PC-3 (cell line): ENCODE measurements at regions of chr15 and their contacts with region 1.

Region 1: DNA sequence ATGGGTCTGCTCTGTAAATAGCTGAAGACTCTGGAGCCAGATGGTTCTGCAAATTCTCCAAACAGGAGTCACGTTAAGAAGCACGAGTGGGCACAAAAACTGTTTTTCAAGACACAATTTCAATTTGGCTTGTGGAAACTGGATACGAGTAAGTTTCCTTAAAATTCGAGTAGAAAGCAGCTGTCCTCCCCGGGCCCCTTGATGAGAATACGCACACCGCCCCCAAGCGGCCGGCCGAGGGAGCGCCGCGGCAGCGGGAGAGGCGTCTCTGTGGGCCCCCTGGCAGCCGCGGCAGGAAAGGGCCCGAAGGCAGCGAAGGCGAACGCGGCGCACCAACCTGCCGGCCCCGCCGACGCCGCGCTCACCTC is 778 bp upstream of the THBS1 start:
- DNase-seq: peak; percentile 96
- ATAC-seq: peak; percentile 59
- H3K4me3 ChIP-seq: peak overlapping the region; percentile 87
- H3K27ac ChIP-seq: peak overlapping the region; percentile 93
- H3K4me1 ChIP-seq: peaks cover 45% of the 10 kb centered on the region
- H3K27me3 ChIP-seq: no peaks in the 10 kb centered on the region
- CTCF ChIP-seq: peak; percentile 95

Region 2: DNA sequence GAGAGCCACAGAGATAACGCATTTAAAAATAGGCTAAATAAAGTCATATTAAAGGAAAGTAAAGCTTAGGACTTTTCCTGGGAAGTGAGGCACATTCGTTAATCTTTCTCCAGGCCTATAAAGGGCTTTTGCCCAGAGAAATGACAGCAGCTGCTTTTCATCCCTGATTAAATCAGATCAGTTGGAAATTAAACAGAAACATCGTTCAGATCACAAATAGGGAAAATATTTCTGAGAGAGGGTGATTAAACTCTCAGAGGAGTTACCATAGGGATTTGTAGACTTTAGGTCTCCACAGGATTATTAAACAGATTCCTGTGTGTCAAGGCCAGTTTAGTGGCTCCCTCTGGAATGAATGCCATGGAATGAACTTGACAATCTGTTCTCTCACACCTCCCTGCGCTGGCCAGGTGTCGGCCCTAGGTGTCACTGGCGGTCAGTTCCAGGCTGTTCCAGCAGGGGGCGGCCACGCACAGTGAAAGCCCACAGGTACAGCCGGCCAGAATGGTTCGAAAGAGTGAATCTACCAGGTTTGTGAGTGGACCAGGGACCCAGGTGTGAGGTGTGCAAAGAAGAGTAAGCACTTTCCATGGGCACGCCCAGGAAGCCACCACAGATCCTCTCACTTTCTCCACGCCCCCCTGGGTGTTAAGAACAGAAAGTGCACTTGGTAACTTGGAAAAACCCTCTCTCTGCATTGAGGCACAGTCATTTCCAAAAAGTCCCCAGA is 762.5 kb before region 1 on chr15:
- CTCF ChIA-PET with region 1: no interaction called
- POLR2A ChIA-PET with region 1: no interaction called
- intact Hi-C with region 1: loop called (anchors 1 kb)
- DNase-seq: peak; percentile 91
- ATAC-seq: peak; percentile 100
- H3K4me3 ChIP-seq: no peak overlapping the region; the same call in 1 of the 2 replicates
- H3K27ac ChIP-seq: no peak overlapping the region
- H3K4me1 ChIP-seq: peaks cover 4% of the 10 kb centered on the region; the same call in 1 of the 2 replicates
- H3K27me3 ChIP-seq: no peaks in the 10 kb centered on the region
- CTCF ChIP-seq: peak; percentile 100

Region 3: GRCh38 chr15:39273717-39274411 is 306.2 kb before region 1 on chr15:
- CTCF ChIA-PET with region 1: interaction called, 3 read pairs
- POLR2A ChIA-PET with region 1: no interaction called
- intact Hi-C with region 1: loop called (anchors 1 kb)
- DNase-seq: peak; percentile 100
- ATAC-seq: peak; percentile 83
- H3K4me3 ChIP-seq: peak overlapping the region; percentile 57
- H3K27ac ChIP-seq: peak overlapping the region; percentile 97
- H3K4me1 ChIP-seq: peaks cover 54% of the 10 kb centered on the region
- H3K27me3 ChIP-seq: no peaks in the 10 kb centered on the region
- CTCF ChIP-seq: no peak

Region 4: GRCh38 chr15:39381517-39381916 is 198.6 kb before region 1 on chr15:
- CTCF ChIA-PET with region 1: no interaction called
- POLR2A ChIA-PET with region 1: no interaction called
- intact Hi-C with region 1: no loop called
- DNase-seq: no peak
- ATAC-seq: no peak
- H3K4me3 ChIP-seq: no peak overlapping the region
- H3K27ac ChIP-seq: no peak overlapping the region
- H3K4me1 ChIP-seq: no peaks in the 10 kb centered on the region
- H3K27me3 ChIP-seq: no peaks in the 10 kb centered on the region
- CTCF ChIP-seq: no peak

Region 5: GRCh38 chr15:39438799-39439592 is 141.1 kb before region 1 on chr15:
- CTCF ChIA-PET with region 1: interaction called, 3 read pairs
- POLR2A ChIA-PET with region 1: interaction called, 4 read pairs
- intact Hi-C with region 1: loop called (anchors 1 kb)
- DNase-seq: peak; percentile 63
- ATAC-seq: peak; percentile 68
- H3K4me3 ChIP-seq: no peak overlapping the region
- H3K27ac ChIP-seq: no peak overlapping the region
- H3K4me1 ChIP-seq: 0 out of 2 replicates have a peak, but pooled peaks cover 4% of the 10 kb centered on the region
- H3K27me3 ChIP-seq: no peaks in the 10 kb centered on the region
- CTCF ChIP-seq: peak; percentile 58

Region 6: DNA sequence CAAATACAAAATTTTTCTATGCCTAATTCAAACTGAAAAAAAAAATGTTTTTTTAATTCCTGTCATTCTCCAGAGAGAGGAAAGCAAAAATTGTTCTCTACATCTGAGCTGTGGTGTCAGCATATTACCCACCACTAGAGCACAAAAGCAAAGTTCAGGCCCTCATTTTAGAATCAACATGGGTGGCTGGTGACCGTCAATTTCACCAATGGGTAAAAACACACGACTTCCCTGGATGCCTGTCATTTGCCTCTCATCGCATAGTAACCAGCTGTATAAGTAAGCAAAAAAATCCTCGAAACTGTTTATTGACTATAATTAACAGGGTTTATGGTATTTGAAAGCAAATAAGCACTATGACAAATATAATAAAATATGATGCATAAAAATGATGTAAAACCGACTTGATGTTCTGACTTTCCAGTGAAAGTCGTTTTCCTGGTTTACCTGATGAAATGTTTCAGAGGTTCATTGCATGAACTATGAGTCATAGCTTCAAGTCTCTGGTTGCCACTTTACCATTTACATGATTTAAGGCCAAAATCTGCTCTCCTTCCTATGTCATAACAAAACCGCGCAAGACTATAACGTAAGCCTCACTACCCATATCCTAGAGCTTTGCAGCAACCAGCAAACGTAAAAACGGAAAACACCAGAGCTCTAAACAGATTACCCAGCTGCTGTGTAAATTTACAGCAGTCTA is 61.2 kb after region 1 on chr15:
- CTCF ChIA-PET with region 1: no interaction called
- POLR2A ChIA-PET with region 1: no interaction called
- intact Hi-C with region 1: loop called (anchors 2 kb)
- DNase-seq: peak; percentile 89
- ATAC-seq: peak; percentile 75
- H3K4me3 ChIP-seq: peak overlapping the region; percentile 24; the same call in 1 of the 2 replicates
- H3K27ac ChIP-seq: peak overlapping the region; percentile 92
- H3K4me1 ChIP-seq: peaks cover 32% of the 10 kb centered on the region
- H3K27me3 ChIP-seq: no peaks in the 10 kb centered on the region
- CTCF ChIP-seq: peak; percentile 34; the same call in 1 of the 2 replicates